ENCODE measurements at regions of chr4 and their contacts with region 1.

Region 1: GRCh38 chr4:183504064-183504929 is 561 bp upstream of the ING2 start:
- DNase-seq: peak; percentile 98 to 100 (median 100)
- ATAC-seq: peak; percentile 89
- H3K4me3 ChIP-seq: peak overlapping the region; percentile 90
- H3K4me3 Mint-ChIP-seq: peak overlapping the region; percentile 83 to 98 (median 92)
- H3K27ac ChIP-seq: peak overlapping the region; percentile 86
- H3K27ac Mint-ChIP-seq: peak overlapping the region; percentile 89 to 99 (median 95)
- H3K4me1 ChIP-seq: peaks cover 6 to 11% of the 10 kb centered on the region in 2 donors
- H3K4me1 Mint-ChIP-seq: peaks cover 11 to 47% (median 43%) of the 10 kb centered on the region in 7 donors
- H3K27me3 ChIP-seq: no peaks in the 10 kb centered on the region
- H3K27me3 Mint-ChIP-seq: no peaks in the 10 kb centered on the region

Region 2: GRCh38 chr4:183098723-183099536 is 405.4 kb before region 1 on chr4 and contains the start of gene WWC2:
- CTCF ChIA-PET with region 1: no interaction called
- POLR2A ChIA-PET with region 1: no interaction called
- intact Hi-C with region 1: loop called in 1 of 2 experiments (anchors 1 kb)
- DNase-seq: peak; percentile 40 to 68 (median 62)
- ATAC-seq: peak; percentile 85
- H3K4me3 ChIP-seq: peak within 1 kb of the TSS; percentile 75
- H3K4me3 Mint-ChIP-seq: peak within 1 kb of the TSS; percentile 51 to 87 (median 83)
- H3K27ac ChIP-seq: peak within 1 kb of the TSS; percentile 48
- H3K27ac Mint-ChIP-seq: peak within 1 kb of the TSS in 3 of 9 donors; percentile 56 to 72 (median 68)
- H3K4me1 ChIP-seq: peaks cover 0 to 4% of the 10 kb centered on the region in 2 donors
- H3K4me1 Mint-ChIP-seq: peaks cover 3 to 53% (median 34%) of the 10 kb centered on the region in 7 donors
- H3K27me3 ChIP-seq: peaks cover 0 to 2% of the 10 kb centered on the region in 2 donors
- H3K27me3 Mint-ChIP-seq: peaks cover 0 to 61% (median 0%) of the 10 kb centered on the region in 5 donors
- total RNA-seq, gene WWC2: 0.07 to 13.8 (median 10.9) TPM

Region 3: DNA sequence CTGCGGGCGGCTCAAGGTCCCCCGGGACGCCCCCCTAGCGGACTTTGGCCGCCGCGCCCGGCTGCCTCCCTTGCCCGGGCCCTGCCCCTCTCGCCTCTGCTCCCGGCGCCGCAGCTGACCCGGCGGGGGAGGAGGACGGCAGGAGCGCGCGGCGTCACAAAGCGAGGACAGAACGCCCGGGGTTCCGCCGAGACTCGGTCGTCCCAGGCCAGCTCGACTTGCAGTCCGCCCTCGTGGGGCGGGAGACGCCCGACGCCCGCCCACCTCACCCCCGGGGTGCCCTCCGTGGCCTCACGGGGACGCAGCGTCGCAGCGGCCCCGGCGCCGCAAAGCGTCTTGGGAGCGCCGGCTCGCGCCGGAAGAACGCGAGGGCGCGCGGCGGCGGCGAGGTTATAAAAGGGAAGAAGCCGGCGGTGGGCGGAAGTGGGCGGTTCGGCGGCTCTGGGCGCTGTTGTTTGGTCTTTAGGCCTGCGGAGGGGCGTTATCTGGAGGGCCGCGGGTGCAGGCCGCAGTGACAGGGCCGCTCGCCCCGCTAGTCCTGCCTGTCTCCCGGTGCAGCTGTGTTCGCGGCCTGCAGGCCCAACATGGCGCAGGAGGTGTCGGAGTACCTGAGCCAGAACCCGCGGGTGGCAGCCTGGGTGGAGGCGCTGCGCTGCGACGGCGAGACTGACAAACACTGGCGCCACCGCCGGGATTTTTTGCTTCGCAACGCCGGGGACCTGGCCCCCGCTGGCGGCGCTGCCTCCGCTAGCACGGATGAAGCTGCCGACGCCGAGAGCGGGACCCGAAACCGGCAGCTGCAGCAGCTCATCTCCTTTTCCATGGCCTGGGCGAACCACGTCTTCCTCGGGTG is 59.9 kb before region 1 on chr4 and contains the start of gene CDKN2AIP:
- CTCF ChIA-PET with region 1: no interaction called
- POLR2A ChIA-PET with region 1: interaction called, 88 read pairs
- intact Hi-C with region 1: loop called (anchors 1 kb)
- DNase-seq: peak; percentile 92 to 97 (median 95)
- ATAC-seq: peak; percentile 93
- H3K4me3 ChIP-seq: peak within 1 kb of the TSS; percentile 81
- H3K4me3 Mint-ChIP-seq: peak within 1 kb of the TSS; percentile 94 to 99 (median 97)
- H3K27ac ChIP-seq: peak within 1 kb of the TSS; percentile 96
- H3K27ac Mint-ChIP-seq: peak within 1 kb of the TSS; percentile 97 to 98 (median 98)
- H3K4me1 ChIP-seq: peaks cover 30 to 33% of the 10 kb centered on the region in 2 donors
- H3K4me1 Mint-ChIP-seq: peaks cover 35 to 66% (median 51%) of the 10 kb centered on the region in 7 donors
- H3K27me3 ChIP-seq: no peaks in the 10 kb centered on the region
- H3K27me3 Mint-ChIP-seq: peaks cover 0 to 5% (median 0%) of the 10 kb centered on the region in 5 donors
- total RNA-seq, gene CDKN2AIP: 24.9 to 58.2 (median 44.4) TPM

Region 4: GRCh38 chr4:183722731-183723560 is 218.6 kb after region 1 on chr4:
- CTCF ChIA-PET with region 1: no interaction called
- POLR2A ChIA-PET with region 1: no interaction called
- intact Hi-C with region 1: loop called (anchors 1 to 10 kb)
- DNase-seq: peak; percentile 17 to 60 (median 41)
- ATAC-seq: peak; percentile 71
- H3K4me3 ChIP-seq: peak overlapping the region; percentile 64
- H3K4me3 Mint-ChIP-seq: peak overlapping the region; percentile 65 to 96 (median 89)
- H3K27ac ChIP-seq: peak overlapping the region; percentile 21
- H3K27ac Mint-ChIP-seq: peak overlapping the region; percentile 33 to 90 (median 75)
- H3K4me1 ChIP-seq: peaks cover 5 to 9% of the 10 kb centered on the region in 2 donors
- H3K4me1 Mint-ChIP-seq: peaks cover 13 to 14% (median 13%) of the 10 kb centered on the region in 7 donors
- H3K27me3 ChIP-seq: no peaks in the 10 kb centered on the region
- H3K27me3 Mint-ChIP-seq: peaks cover 0 to 48% (median 0%) of the 10 kb centered on the region in 5 donors

Region 5: GRCh38 chr4:183747931-183748670 is 243.8 kb after region 1 on chr4:
- CTCF ChIA-PET with region 1: no interaction called
- POLR2A ChIA-PET with region 1: no interaction called
- intact Hi-C with region 1: no loop called
- DNase-seq: no peak
- ATAC-seq: no peak
- H3K4me3 ChIP-seq: no peak overlapping the region
- H3K4me3 Mint-ChIP-seq: no peak overlapping the region
- H3K27ac ChIP-seq: no peak overlapping the region
- H3K27ac Mint-ChIP-seq: no peak overlapping the region
- H3K4me1 ChIP-seq: no peaks in the 10 kb centered on the region
- H3K4me1 Mint-ChIP-seq: no peaks in the 10 kb centered on the region
- H3K27me3 ChIP-seq: no peaks in the 10 kb centered on the region
- H3K27me3 Mint-ChIP-seq: peaks cover 6 to 19% (median 9%) of the 10 kb centered on the region in 5 donors

Region 6: GRCh38 chr4:184733654-184734524 is 1229.6 kb after region 1 on chr4 and contains the start of gene CENPU:
- CTCF ChIA-PET with region 1: no interaction called
- POLR2A ChIA-PET with region 1: no interaction called
- intact Hi-C with region 1: loop called (anchors 1 to 2 kb)
- DNase-seq: peak; percentile 89 to 98 (median 94)
- ATAC-seq: peak; percentile 98
- H3K4me3 ChIP-seq: peak within 1 kb of the TSS; percentile 82
- H3K4me3 Mint-ChIP-seq: peak within 1 kb of the TSS; percentile 84 to 98 (median 89)
- H3K27ac ChIP-seq: peak within 1 kb of the TSS; percentile 66
- H3K27ac Mint-ChIP-seq: peak within 1 kb of the TSS; percentile 60 to 96 (median 89)
- H3K4me1 ChIP-seq: peaks cover 7 to 11% of the 10 kb centered on the region in 2 donors
- H3K4me1 Mint-ChIP-seq: peaks cover 4 to 50% (median 20%) of the 10 kb centered on the region in 7 donors
- H3K27me3 ChIP-seq: no peaks in the 10 kb centered on the region
- H3K27me3 Mint-ChIP-seq: no peaks in the 10 kb centered on the region
- total RNA-seq, gene CENPU: 1.1 to 43.8 (median 3.1) TPM

Region 7: GRCh38 chr4:185425647-185426352 is 1921.5 kb after region 1 on chr4 and contains the start of gene UFSP2:
- CTCF ChIA-PET with region 1: no interaction called
- POLR2A ChIA-PET with region 1: no interaction called
- intact Hi-C with region 1: loop called in 1 of 2 experiments (anchors 10 kb)
- DNase-seq: peak; percentile 88 to 96 (median 92)
- ATAC-seq: peak; percentile 93
- H3K4me3 ChIP-seq: peak within 1 kb of the TSS; percentile 98
- H3K4me3 Mint-ChIP-seq: peak within 1 kb of the TSS; percentile 78 to 97 (median 90)
- H3K27ac ChIP-seq: peak within 1 kb of the TSS; percentile 95
- H3K27ac Mint-ChIP-seq: peak within 1 kb of the TSS; percentile 89 to 100 (median 99)
- H3K4me1 ChIP-seq: peaks cover 16 to 18% of the 10 kb centered on the region in 2 donors
- H3K4me1 Mint-ChIP-seq: peaks cover 25 to 43% (median 38%) of the 10 kb centered on the region in 7 donors
- H3K27me3 ChIP-seq: no peaks in the 10 kb centered on the region
- H3K27me3 Mint-ChIP-seq: peaks cover 0 to 12% (median 7%) of the 10 kb centered on the region in 5 donors
- total RNA-seq, gene UFSP2: 13.9 to 34.5 (median 21.0) TPM

Measured in naive thymus-derived CD4-positive, alpha-beta T cell (primary cell).